ENCODE measurements at regions of chr1 and their contacts with region 1.

Region 1: GRCh38 chr1:224205438-224205840 is 22.4 kb downstream of the DEGS1 start:
- DNase-seq: peak; percentile 88 to 99 (median 92)
- H3K4me3 ChIP-seq: peak overlapping the region in 1 of 3 experiments; percentile 66
- H3K4me3 Mint-ChIP-seq: peak overlapping the region in 1 of 2 donors; percentile 71
- H3K27ac ChIP-seq: peak overlapping the region; percentile 74 to 93
- H3K27ac Mint-ChIP-seq: peak overlapping the region; percentile 87 to 97 (median 95)
- H3K4me1 ChIP-seq: peaks cover 57 to 66% of the 10 kb centered on the region in 2 donors
- H3K4me1 Mint-ChIP-seq: peaks cover 62% of the 10 kb centered on the region
- H3K27me3 ChIP-seq: no peaks in the 10 kb centered on the region
- H3K27me3 Mint-ChIP-seq: no peaks in the 10 kb centered on the region
- CTCF ChIP-seq: no peak

Region 2: DNA sequence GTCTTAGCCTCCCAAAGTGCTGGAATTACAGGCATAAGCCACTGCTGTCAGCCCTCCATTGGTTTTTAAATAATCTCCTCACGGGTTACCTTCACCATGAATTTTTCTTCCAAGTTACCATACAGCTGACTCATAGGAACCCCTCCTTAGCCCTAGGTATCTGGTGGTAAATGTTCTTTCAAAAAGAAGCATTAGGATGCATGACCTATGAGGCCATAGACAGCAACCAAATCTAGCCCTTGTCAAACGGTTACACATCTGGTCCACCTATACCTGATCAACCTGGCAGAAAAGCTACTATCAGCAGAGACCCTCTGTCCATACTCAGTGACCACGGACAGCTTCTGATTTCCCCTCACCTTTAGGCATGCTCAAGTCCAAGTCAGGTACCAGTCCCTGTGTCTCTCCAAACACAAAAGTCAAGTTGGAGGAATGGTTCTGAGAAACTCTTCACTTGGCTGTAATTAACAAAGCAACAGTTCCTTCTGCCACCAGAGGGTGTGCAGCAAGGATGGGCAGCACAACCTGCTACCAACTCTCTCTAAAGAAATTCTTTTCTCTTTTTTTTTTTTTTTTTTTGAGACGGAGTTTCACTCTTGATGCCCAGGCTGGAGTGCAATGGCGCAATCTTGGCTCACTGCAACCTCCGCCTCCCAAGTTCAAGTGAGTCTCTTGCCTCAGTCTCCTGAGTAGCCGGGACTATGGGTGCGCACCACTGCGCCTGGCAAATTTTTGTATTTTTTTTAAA is 34.9 kb before region 1 on chr1:
- intact Hi-C with region 1: loop called in 1 of 2 experiments (anchors 5 kb)
- DNase-seq: peak; percentile 65 to 75 (median 68)
- H3K4me3 ChIP-seq: peak overlapping the region in 1 of 3 experiments; percentile 40
- H3K4me3 Mint-ChIP-seq: peak overlapping the region in 1 of 2 donors; percentile 19
- H3K27ac ChIP-seq: peak overlapping the region; percentile 81 to 86
- H3K27ac Mint-ChIP-seq: peak overlapping the region; percentile 90 to 98 (median 97)
- H3K4me1 ChIP-seq: peaks cover 32 to 36% of the 10 kb centered on the region in 2 donors
- H3K4me1 Mint-ChIP-seq: peaks cover 37% of the 10 kb centered on the region
- H3K27me3 ChIP-seq: no peaks in the 10 kb centered on the region
- H3K27me3 Mint-ChIP-seq: peaks cover 3 to 5% (median 4%) of the 10 kb centered on the region in 3 donors
- CTCF ChIP-seq: peak; percentile 55

Region 3: DNA sequence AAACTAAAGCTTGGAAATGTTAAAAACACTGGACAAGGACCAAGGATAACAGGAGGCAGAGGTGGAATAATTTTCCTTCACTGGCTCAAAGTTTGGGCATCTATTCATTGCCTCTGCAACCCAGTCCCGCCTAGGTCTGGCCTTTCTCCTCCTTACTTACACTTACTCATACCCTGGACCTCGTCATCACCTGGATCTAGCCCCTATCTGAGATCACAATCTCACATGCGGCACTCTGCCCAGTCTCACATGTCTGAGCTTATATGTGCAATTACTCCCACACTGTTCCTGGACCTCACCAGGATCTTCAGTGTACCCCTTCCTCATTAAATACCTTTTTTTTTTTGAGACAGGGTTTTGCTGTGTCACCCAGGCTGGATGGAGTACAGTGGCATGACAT is 87.0 kb after region 1 on chr1:
- intact Hi-C with region 1: no loop called
- DNase-seq: no peak
- H3K4me3 ChIP-seq: no peak overlapping the region
- H3K4me3 Mint-ChIP-seq: no peak overlapping the region
- H3K27ac ChIP-seq: no peak overlapping the region
- H3K27ac Mint-ChIP-seq: peak overlapping the region in 1 of 7 donors; percentile 66
- H3K4me1 ChIP-seq: no peaks in the 10 kb centered on the region
- H3K4me1 Mint-ChIP-seq: no peaks in the 10 kb centered on the region
- H3K27me3 ChIP-seq: no peaks in the 10 kb centered on the region
- H3K27me3 Mint-ChIP-seq: no peaks in the 10 kb centered on the region
- CTCF ChIP-seq: no peak